Activated T-helper 1 cell treated with anti-CD3 and anti-CD28 coated beads, Interleukin-12 subunit alpha, Interleukin-12 subunit beta, Interleukin-2, Interleukin-4 antibody, amounts not matched to agents 30 ng/mL and 10 ng/mL and 1 ng/mL, durations not matched to agents 14 hours and 24 hours and 36 hours (primary cell): ENCODE measurements at regions of chr2 and their contacts with region 1.

Region 1: GRCh38 chr2:186641807-186642321 is 52.0 kb upstream of the FAM171B start:
- DNase-seq: peak; percentile 26
- H3K4me3 Mint-ChIP-seq: no peak overlapping the region
- H3K27ac Mint-ChIP-seq: no peak overlapping the region
- H3K4me1 Mint-ChIP-seq: peaks cover 21% of the 10 kb centered on the region
- H3K27me3 Mint-ChIP-seq: no peaks in the 10 kb centered on the region

Region 2: GRCh38 chr2:186445506-186445905 is 196.4 kb before region 1 on chr2:
- intact Hi-C with region 1: no loop called
- DNase-seq: no peak
- H3K4me3 Mint-ChIP-seq: no peak overlapping the region
- H3K27ac Mint-ChIP-seq: no peak overlapping the region
- H3K4me1 Mint-ChIP-seq: no peaks in the 10 kb centered on the region
- H3K27me3 Mint-ChIP-seq: no peaks in the 10 kb centered on the region

Region 3: GRCh38 chr2:186503848-186504606 is 137.8 kb before region 1 on chr2:
- intact Hi-C with region 1: loop called (anchors 1 kb)
- DNase-seq: no peak
- H3K4me3 Mint-ChIP-seq: no peak overlapping the region
- H3K27ac Mint-ChIP-seq: no peak overlapping the region
- H3K4me1 Mint-ChIP-seq: peaks cover 13% of the 10 kb centered on the region
- H3K27me3 Mint-ChIP-seq: no peaks in the 10 kb centered on the region

Region 4: GRCh38 chr2:187206071-187206470 is 564.2 kb after region 1 on chr2:
- intact Hi-C with region 1: no loop called
- DNase-seq: no peak
- H3K4me3 Mint-ChIP-seq: no peak overlapping the region
- H3K27ac Mint-ChIP-seq: no peak overlapping the region
- H3K4me1 Mint-ChIP-seq: no peaks in the 10 kb centered on the region
- H3K27me3 Mint-ChIP-seq: no peaks in the 10 kb centered on the region